Left cardiac atrium (tissue), 4 donors: ENCODE measurements at regions of chr5 and their contacts with region 1.

Region 1: DNA sequence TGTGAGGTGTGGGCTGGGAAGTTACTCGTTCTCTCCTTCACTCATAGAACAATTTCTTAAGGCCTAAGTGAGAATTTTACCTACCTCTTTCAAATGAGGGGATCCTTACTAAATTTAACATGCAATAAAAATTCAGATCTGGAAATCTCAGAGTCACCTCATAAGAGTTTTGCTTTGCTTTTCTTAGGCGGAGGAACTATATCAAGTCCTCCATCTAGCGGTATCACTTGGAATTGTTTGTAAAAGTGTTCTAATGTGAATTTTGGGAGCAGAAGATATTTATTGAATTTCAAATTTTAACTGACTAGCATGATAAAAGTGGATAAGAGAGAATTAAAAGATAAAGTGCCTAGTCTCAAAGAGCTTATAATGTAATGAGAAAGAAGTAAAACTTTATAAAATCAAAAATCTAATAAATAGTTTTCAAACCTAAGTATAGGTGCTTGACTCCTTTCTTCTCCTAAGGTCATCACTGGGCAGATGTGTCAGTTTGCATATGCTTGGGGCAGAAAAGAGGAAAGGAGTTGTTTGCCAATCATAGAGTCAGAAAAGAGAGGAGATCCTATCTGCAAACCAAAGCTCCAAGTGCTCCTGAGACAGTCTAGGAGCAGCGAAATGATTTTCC is 145.7 kb upstream of the DAB2 start:
- DNase-seq: no peak
- ATAC-seq: no peak

Region 2: GRCh38 chr5:39217365-39218281 is 352.9 kb before region 1 on chr5:
- intact Hi-C with region 1: loop called (anchors 5 to 10 kb)
- DNase-seq: peak; percentile 75
- ATAC-seq: peak; percentile 70 to 83

Region 3: GRCh38 chr5:39224196-39224761 is 346.2 kb before region 1 on chr5:
- intact Hi-C with region 1: loop called (anchors 5 to 10 kb)
- DNase-seq: no peak
- ATAC-seq: peak in 1 of 2 donors; percentile 78

Region 4: DNA sequence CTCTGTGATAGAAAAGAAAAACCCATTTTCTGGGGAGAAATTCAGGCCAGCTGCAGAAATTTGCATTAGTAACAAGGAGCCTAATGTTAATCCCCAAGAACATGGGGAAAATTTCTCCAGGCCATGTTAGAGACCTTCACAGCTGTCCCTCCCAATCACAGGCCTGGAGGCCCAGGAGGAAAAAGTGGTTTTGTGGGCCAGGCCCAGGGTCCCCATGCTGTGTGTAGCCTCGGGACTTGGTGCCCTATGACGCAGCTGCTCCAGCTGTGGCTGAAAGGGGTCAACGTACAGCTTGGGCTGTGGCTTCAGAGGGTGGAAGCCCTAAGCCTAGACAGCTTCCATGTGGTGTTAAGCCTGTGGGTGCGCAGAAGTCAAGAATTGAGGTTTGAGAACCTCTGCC is 1311.8 kb after region 1 on chr5:
- intact Hi-C with region 1: loop called in 1 of 2 experiments (anchors 10 kb)
- DNase-seq: no peak
- ATAC-seq: no peak